Heart left ventricle (tissue), 16 donors: ENCODE measurements at regions of chr15 and their contacts with region 1.

Region 1: GRCh38 chr15:53072025-53072471 is 281.9 kb upstream of the ONECUT1 start:
- DNase-seq: peak in 1 of 5 donors; percentile 5
- ATAC-seq: peak in 2 of 4 donors; percentile 24 to 75
- H3K4me3 ChIP-seq: no peak overlapping the region
- H3K27ac ChIP-seq: no peak overlapping the region
- H3K4me1 ChIP-seq: no peaks in the 10 kb centered on the region
- H3K27me3 ChIP-seq: peaks cover 0 to 4% (median 0%) of the 10 kb centered on the region in 9 donors
- CTCF ChIP-seq: no peak
- POLR2A ChIP-seq: no peak

Region 2: DNA sequence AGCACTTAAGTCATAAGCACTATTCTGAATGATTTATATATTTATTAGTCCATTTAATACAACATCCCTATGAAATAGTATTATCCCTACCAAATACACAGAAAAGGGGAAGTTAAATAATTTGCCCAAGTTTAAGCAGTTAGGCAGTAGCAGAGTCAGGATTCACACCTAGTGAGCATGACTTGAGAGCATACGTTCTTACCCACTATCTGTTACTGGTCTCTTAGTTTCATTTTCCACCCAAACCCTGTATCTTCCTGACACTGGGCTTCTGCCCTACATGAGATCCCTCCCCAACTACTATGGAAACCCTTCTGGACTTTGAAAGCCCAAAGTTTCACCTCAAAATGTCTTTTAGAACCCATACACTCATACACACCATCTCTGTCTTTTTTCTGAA is 388.5 kb before region 1 on chr15:
- intact Hi-C with region 1: no loop called
- DNase-seq: no peak
- ATAC-seq: no peak
- H3K4me3 ChIP-seq: no peak overlapping the region
- H3K27ac ChIP-seq: peak overlapping the region in 1 of 12 donors; percentile 7
- H3K4me1 ChIP-seq: peaks cover 0 to 13% (median 3%) of the 10 kb centered on the region in 12 donors
- H3K27me3 ChIP-seq: no peaks in the 10 kb centered on the region
- CTCF ChIP-seq: no peak
- POLR2A ChIP-seq: no peak

Region 3: GRCh38 chr15:53114960-53115359 is 42.9 kb after region 1 on chr15:
- intact Hi-C with region 1: no loop called
- DNase-seq: no peak
- ATAC-seq: no peak
- H3K4me3 ChIP-seq: no peak overlapping the region
- H3K27ac ChIP-seq: no peak overlapping the region
- H3K4me1 ChIP-seq: no peaks in the 10 kb centered on the region
- H3K27me3 ChIP-seq: peaks cover 0 to 3% (median 0%) of the 10 kb centered on the region in 9 donors
- CTCF ChIP-seq: no peak
- POLR2A ChIP-seq: no peak

Region 4: GRCh38 chr15:53133255-53133850 is 61.3 kb after region 1 on chr15:
- intact Hi-C with region 1: loop called in 1 of 10 experiments (anchors 10 kb)
- DNase-seq: no peak
- ATAC-seq: no peak
- H3K4me3 ChIP-seq: no peak overlapping the region
- H3K27ac ChIP-seq: no peak overlapping the region
- H3K4me1 ChIP-seq: no peaks in the 10 kb centered on the region
- H3K27me3 ChIP-seq: no peaks in the 10 kb centered on the region
- CTCF ChIP-seq: no peak
- POLR2A ChIP-seq: no peak

Region 5: DNA sequence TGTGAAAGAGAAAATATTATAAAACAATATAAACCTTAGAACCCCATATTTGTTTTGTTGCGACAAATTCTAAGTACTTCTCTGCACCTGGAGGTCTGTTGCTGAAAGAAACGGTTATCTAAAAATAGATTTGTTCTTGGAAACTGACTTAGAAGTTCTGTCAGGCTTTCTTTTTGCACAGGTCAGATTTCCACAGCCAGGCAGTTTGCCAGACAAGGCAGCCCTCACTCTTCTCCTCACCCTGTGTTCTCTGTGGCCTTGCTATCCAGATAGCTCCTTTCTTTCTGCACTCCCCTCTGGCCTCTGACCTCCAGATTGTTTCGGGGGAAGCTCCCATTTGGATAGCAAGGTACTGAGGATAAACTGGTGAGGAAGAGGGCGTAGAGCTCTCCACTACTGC is 131.4 kb after region 1 on chr15:
- intact Hi-C with region 1: no loop called
- DNase-seq: no peak
- ATAC-seq: no peak
- H3K4me3 ChIP-seq: no peak overlapping the region
- H3K27ac ChIP-seq: no peak overlapping the region
- H3K4me1 ChIP-seq: no peaks in the 10 kb centered on the region
- H3K27me3 ChIP-seq: peaks cover 0 to 4% (median 0%) of the 10 kb centered on the region in 9 donors
- CTCF ChIP-seq: no peak
- POLR2A ChIP-seq: no peak

Region 6: GRCh38 chr15:53746101-53746500 is 674.1 kb after region 1 on chr15:
- intact Hi-C with region 1: no loop called
- DNase-seq: no peak
- ATAC-seq: no peak
- H3K4me3 ChIP-seq: no peak overlapping the region
- H3K27ac ChIP-seq: no peak overlapping the region
- H3K4me1 ChIP-seq: no peaks in the 10 kb centered on the region
- H3K27me3 ChIP-seq: no peaks in the 10 kb centered on the region
- CTCF ChIP-seq: no peak
- POLR2A ChIP-seq: no peak